ENCODE measurements at regions of chr11 and their contacts with region 1.

Region 1: DNA sequence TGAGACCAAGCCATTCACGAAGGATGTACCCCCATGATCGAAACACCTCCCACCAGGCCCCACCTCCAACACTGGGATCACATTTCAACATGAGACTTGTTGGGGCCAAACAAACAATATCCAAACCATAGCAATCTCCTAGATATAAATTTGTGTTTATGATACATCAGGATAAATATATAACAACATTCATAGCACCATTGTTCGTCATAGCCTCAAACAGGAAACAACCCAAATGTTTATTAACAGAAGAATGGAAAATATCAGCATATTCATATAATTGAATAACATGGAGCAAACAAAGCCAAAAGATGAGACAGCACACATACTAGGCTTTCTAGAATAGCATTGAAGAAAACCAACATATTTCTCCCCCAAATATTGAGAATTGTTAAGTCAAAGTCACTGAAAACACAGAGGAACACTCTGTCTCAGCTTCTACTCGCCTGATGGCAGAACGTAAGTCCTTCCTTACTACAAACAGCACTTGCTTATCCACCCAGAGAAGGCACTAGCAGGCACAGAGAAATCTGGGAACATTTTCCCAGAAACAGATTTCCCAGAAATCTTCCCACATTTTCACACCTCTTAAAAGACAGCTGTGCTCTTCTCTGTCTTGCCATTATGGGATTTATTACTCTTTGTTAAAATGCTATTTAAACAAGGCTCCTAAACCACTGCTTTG is 8.1 kb upstream of the GDPD4 start:
- DNase-seq: no peak
- H3K4me3 Mint-ChIP-seq: no peak overlapping the region
- H3K27ac Mint-ChIP-seq: no peak overlapping the region
- H3K4me1 Mint-ChIP-seq: no peaks in the 10 kb centered on the region
- H3K27me3 Mint-ChIP-seq: no peaks in the 10 kb centered on the region
- CTCF ChIP-seq: no peak

Region 2: DNA sequence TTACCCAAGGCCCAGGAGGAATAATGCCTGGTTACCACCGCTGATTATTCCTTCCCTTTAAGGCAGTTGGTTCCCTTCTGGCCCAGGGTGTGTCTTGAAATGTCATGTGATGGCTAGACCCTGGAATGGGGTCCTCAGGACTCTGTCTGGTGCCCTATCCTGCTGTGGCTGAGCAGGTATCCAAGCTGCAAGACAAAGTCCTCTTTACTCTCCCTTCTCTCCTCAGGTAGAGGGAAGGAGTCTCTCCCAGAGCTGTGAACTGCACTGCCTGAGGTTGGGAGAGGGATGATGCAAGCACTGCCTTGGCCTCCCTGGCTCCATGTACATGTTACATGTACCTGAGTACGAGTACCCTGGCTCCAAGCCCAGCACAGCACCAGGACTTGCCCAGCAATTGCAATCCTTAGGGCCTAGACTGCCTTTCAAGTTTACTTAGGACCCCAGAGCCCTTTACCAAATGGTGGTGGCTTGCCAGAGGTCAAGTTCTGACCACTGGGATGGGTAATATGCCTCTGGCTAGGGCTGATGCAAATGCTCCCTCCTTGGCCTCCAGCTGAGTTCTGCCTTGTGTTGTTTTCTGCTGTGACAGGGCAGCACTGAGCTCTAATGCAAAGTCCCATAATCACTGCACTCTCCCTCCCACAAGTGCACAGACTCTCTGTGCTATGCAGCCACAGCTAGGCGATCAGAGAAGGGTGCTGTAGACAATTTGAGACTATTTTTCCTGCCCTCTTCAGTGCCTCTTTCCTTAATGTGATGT is 259.6 kb after region 1 on chr11:
- CTCF ChIA-PET with region 1: interaction called, 15 read pairs
- intact Hi-C with region 1: no loop called
- DNase-seq: no peak
- H3K4me3 Mint-ChIP-seq: no peak overlapping the region
- H3K27ac Mint-ChIP-seq: no peak overlapping the region
- H3K4me1 Mint-ChIP-seq: no peaks in the 10 kb centered on the region
- H3K27me3 Mint-ChIP-seq: no peaks in the 10 kb centered on the region
- CTCF ChIP-seq: no peak

Measured in Calu3 (cell line).